Common myeloid progenitor, CD34-positive (primary cell): ENCODE measurements at regions of chr5 and their contacts with region 1.

Region 1: DNA sequence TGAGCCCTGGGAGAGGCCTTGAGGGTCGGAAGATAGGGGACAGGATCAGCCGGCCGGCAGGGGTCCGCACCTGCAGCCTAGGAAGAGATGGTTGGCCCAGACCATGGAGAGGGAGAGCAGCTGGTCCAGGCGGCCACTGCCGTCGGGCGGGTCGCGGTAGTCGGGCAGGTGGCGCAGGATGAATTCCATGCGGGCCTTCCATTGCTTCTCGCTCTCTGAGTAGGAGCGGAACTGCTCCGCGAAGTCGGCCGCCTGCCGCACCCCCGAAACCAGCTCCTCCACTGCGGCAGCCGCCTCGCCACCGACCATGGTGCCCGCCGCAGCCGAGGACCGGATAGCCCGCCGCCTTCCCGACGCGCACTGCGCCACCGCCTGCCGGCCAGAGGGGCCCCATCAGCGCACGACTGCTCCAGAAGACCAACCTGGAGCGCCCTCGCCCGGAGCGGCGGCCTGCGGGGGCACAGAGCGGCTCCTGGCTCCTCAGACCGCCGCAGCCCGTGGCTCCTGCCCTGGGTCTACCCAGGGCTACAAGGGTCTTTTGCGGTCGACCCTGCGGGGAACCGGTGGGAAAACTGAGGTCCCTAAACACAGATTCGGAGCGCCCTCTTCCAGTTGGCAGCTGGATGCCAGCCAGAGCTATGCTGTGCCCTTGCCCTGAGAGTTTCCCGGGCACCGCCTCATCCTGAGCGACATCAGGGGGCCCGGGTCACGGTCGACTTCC is at the start of gene CDKN2AIPNL:
- DNase-seq: peak; percentile 89 to 94 (median 91)
- H3K4me3 ChIP-seq: peak within 1 kb of the TSS; percentile 65 to 90 (median 86)
- H3K27ac ChIP-seq: peak within 1 kb of the TSS in 1 of 2 experiments; percentile 84
- H3K4me1 ChIP-seq: peaks cover 9 to 24% (median 16%) of the 10 kb centered on the region in 4 experiments
- H3K27me3 ChIP-seq: no peaks in the 10 kb centered on the region

Region 2: GRCh38 chr5:134430001-134430569 is 18.4 kb after region 1 on chr5:
- CTCF ChIA-PET with region 1: interaction called, 32 read pairs
- POLR2A ChIA-PET with region 1: no interaction called
- DNase-seq: no peak
- H3K4me3 ChIP-seq: no peak overlapping the region
- H3K27ac ChIP-seq: no peak overlapping the region
- H3K4me1 ChIP-seq: no peaks in the 10 kb centered on the region
- H3K27me3 ChIP-seq: no peaks in the 10 kb centered on the region

Region 3: DNA sequence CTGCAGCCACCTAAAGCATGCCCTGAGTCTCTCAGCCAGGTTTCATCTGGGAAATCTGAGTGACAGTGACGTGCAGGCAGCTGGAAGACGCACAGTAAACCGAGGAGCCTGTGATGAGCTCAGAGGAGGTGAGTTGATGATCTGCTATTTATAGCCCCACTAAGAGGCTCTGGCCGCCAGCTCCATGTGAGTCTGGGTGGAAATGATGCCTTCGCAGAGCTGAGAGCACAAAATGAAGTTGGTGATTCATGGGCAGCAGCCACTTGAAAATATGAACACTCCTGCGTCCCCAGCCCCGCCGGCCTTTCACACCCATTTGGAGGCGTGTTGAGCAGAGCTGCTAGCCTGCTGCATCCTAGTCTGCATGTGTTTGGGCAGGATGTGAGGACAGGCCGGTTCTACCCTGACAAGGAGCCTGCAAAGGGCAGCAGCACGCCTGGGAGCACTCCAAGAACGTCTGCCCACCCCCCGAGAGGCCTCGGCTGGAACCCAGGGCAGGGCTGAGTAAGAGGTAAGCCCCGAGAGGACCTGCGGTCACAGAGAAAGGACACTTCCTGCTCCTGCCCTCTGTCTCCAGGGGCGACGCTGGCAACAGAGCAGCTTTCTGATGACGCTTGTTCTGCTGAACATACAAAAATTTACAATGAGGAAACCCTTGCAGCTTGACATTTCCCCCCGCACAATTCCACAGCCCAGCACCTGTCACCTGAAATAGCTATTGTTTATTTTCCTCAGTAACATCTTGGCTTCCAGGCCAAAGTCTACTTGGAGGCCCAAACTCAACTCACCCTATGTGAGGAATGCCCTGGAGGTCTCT is 25.0 kb after region 1 on chr5:
- CTCF ChIA-PET with region 1: interaction called, 11 read pairs
- POLR2A ChIA-PET with region 1: interaction called, 5 read pairs
- DNase-seq: peak; percentile 89 to 97 (median 96)
- H3K4me3 ChIP-seq: peak overlapping the region in 3 of 7 experiments; percentile 27 to 65 (median 33)
- H3K27ac ChIP-seq: peak overlapping the region; percentile 81
- H3K4me1 ChIP-seq: peaks cover 4 to 26% (median 19%) of the 10 kb centered on the region in 4 experiments
- H3K27me3 ChIP-seq: no peaks in the 10 kb centered on the region

Region 4: DNA sequence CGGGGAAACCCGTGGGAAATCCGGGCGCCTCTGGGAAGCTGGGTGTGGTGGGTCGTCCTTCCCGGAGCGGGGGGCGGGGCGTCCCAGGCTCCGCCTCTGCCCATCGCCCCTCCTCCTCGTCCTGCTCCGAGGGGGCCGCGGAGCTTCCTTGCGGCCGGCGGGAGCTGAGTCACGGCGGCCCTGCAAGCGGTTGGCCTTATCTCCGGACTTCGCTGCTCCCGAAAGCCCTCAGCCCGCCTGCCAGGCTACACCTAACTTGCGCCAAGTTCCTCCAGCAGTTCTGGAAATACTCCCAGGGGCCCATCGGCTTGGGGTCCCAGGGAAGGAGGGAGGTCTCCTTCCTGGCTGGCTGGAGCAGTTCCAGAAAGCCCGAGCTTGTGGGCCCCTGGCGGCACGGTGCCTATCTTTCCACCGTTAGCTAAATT is 54.1 kb after region 1 on chr5:
- CTCF ChIA-PET with region 1: interaction called, 10 read pairs
- POLR2A ChIA-PET with region 1: interaction called, 3 read pairs
- DNase-seq: peak; percentile 84 to 88 (median 86)
- H3K4me3 ChIP-seq: peak overlapping the region; percentile 18 to 78 (median 64)
- H3K27ac ChIP-seq: peak overlapping the region; percentile 54 to 88
- H3K4me1 ChIP-seq: peaks cover 0 to 50% (median 43%) of the 10 kb centered on the region in 4 experiments
- H3K27me3 ChIP-seq: no peaks in the 10 kb centered on the region

Region 5: GRCh38 chr5:134503088-134503946 is 91.6 kb after region 1 on chr5:
- CTCF ChIA-PET with region 1: interaction called, 22 read pairs
- POLR2A ChIA-PET with region 1: no interaction called
- DNase-seq: peak; percentile 84 to 93 (median 90)
- H3K4me3 ChIP-seq: peak overlapping the region in 3 of 7 experiments; percentile 39 to 52 (median 39)
- H3K27ac ChIP-seq: peak overlapping the region; percentile 74 to 88
- H3K4me1 ChIP-seq: peaks cover 12 to 54% (median 53%) of the 10 kb centered on the region in 4 experiments
- H3K27me3 ChIP-seq: no peaks in the 10 kb centered on the region

Region 6: DNA sequence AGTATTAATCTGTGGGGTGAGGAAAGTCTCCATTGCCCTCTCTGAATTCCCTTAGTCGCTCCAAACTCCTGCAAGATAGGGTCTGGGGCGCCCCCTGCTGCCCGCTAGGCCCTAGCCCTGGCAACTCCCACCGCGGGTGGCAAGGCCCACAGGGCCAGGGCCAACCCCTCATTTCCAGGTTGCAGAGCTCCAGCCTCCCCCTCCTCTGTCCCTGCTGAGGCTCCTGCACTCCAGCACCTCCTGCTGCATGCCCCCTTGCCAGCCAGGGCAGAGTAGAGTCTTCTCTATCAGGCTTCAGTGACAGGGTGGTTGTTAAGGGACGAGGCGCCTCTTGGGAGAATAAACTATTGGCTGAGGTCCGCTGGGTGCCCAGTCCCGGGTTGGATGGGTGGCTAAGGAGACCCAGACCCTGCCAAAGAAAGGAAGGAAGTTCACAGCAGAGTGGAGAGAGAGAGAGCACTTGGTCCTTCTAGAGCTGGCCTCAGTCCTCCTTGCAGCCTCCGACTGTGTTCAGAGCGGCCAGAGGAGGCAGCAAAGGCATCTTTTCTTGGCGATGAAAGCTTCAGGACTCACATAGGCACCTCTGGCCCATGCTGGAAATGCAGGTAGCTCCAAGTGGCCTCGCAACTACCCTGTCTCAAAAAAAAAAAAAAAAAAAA is 175.3 kb after region 1 on chr5:
- CTCF ChIA-PET with region 1: interaction called, 13 read pairs
- POLR2A ChIA-PET with region 1: no interaction called
- DNase-seq: peak; percentile 93 to 96 (median 95)
- H3K4me3 ChIP-seq: peak overlapping the region in 3 of 7 experiments; percentile 32 to 46 (median 42)
- H3K27ac ChIP-seq: no peak overlapping the region
- H3K4me1 ChIP-seq: peaks cover 0 to 9% (median 4%) of the 10 kb centered on the region in 4 experiments
- H3K27me3 ChIP-seq: no peaks in the 10 kb centered on the region